Sigmoid colon (tissue), 7 donors: ENCODE measurements at regions of chr6 and their contacts with region 1.

Region 1: GRCh38 chr6:111210194-111210728 is 123.0 kb downstream of the SLC16A10 start:
- DNase-seq: no peak
- H3K4me3 ChIP-seq: no peak overlapping the region
- H3K27ac ChIP-seq: no peak overlapping the region
- H3K4me1 ChIP-seq: no peaks in the 10 kb centered on the region
- H3K27me3 ChIP-seq: no peaks in the 10 kb centered on the region
- CTCF ChIP-seq: peak; percentile 25 to 63 (median 56)
- EP300 ChIP-seq: no peak
- POLR2A ChIP-seq: no peak

Region 2: DNA sequence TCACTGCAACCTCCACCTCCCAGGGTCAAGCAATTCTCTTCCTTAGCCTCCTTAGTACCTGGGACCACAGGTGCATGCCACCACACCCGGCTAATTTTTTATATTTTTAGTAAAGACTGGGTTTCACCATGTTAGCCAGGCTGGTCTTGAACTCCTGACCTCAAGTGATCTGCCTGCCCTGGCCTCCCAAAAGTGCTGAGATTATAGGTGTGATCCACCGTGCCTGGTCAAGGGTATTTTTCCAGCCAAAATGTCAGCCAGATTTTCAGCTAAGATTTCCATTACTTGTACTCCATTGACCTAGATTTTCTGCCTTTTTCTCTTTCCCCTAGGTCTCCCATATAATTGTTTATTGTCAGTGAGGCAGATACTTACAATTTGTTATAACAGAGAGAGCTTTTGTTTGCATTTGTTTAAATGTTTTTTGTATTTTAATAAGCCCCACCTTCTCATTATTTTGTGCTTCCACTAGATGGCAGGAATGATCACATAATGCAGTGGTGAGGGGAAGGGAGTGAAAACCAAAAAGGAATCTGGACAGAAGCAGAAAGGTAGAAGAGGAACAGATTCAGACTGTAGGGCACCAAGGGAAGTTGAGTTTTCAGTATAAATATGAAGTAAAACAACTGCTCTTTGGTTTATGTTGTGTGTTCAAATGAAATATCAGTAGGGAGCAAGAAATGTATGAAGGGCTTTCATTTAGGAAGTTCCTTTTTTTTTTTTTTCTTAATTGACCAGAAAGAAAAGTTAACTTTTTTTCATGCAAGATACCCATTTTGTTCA is 198.7 kb before region 1 on chr6:
- intact Hi-C with region 1: loop called (anchors 5 kb)
- DNase-seq: no peak
- H3K4me3 ChIP-seq: no peak overlapping the region
- H3K27ac ChIP-seq: no peak overlapping the region
- H3K4me1 ChIP-seq: no peaks in the 10 kb centered on the region
- H3K27me3 ChIP-seq: no peaks in the 10 kb centered on the region
- CTCF ChIP-seq: peak in 3 of 4 experiments; percentile 26 to 49 (median 42)
- EP300 ChIP-seq: no peak
- POLR2A ChIP-seq: no peak

Region 3: GRCh38 chr6:111263837-111264236 is 53.6 kb after region 1 on chr6:
- intact Hi-C with region 1: no loop called
- DNase-seq: no peak
- H3K4me3 ChIP-seq: no peak overlapping the region
- H3K27ac ChIP-seq: no peak overlapping the region
- H3K4me1 ChIP-seq: peaks cover 0 to 46% (median 17%) of the 10 kb centered on the region in 4 donors
- H3K27me3 ChIP-seq: no peaks in the 10 kb centered on the region
- CTCF ChIP-seq: no peak
- EP300 ChIP-seq: no peak
- POLR2A ChIP-seq: no peak

Region 4: GRCh38 chr6:112087136-112087911 is 877.1 kb after region 1 on chr6 and contains the starts of genes FAM229B and TUBE1:
- intact Hi-C with region 1: no loop called
- DNase-seq: peak; percentile 96
- H3K4me3 ChIP-seq: peak within 1 kb of the TSS; percentile 64 to 87 (median 78)
- H3K27ac ChIP-seq: peak within 1 kb of the TSS; percentile 87 to 93 (median 88)
- H3K4me1 ChIP-seq: peaks cover 0 to 21% (median 9%) of the 10 kb centered on the region in 4 donors
- H3K27me3 ChIP-seq: no peaks in the 10 kb centered on the region
- CTCF ChIP-seq: no peak
- EP300 ChIP-seq: peak in 2 of 4 donors; percentile 32 to 52
- POLR2A ChIP-seq: peak; percentile 86 to 94
- total RNA-seq, gene FAM229B: 11.4 to 22.2 (median 16.6) TPM
- total RNA-seq, gene TUBE1: 32.5 to 65.2 (median 48.6) TPM